CD8-positive, alpha-beta memory T cell (primary cell): ENCODE measurements at regions of chr6 and their contacts with region 1.

Region 1: DNA sequence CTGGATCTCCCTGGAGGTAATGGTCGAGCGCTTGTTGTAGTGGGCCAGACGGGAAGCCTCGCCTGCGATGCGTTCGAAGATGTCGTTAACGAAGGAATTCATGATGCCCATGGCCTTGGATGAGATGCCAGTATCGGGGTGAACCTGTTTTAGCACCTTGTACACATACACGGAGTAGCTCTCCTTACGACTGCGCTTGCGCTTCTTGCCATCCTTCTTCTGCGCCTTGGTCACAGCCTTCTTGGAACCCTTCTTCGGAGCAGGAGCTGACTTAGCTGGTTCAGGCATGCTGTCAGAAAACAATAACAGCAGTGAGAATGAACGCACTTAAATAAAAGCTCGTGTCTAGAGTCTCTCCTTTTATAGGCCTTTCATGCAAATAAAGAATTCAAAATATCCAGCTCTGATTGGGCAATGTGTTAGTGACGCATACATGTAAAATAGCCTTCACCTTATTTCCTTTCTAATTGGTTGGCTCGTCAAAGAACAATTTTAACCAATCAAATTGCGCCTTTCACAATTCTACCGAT is 129.2 kb downstream of the HFE start:
- DNase-seq: peak; percentile 43 to 93 (median 91)
- H3K4me3 ChIP-seq: peak overlapping the region; percentile 91
- H3K4me3 Mint-ChIP-seq: no peak overlapping the region
- H3K27ac ChIP-seq: peak overlapping the region; percentile 94
- H3K27ac Mint-ChIP-seq: no peak overlapping the region
- H3K4me1 ChIP-seq: peaks cover 23% of the 10 kb centered on the region
- H3K4me1 Mint-ChIP-seq: peaks cover 2 to 8% (median 5%) of the 10 kb centered on the region in 3 donors
- H3K27me3 ChIP-seq: no peaks in the 10 kb centered on the region
- H3K27me3 Mint-ChIP-seq: no peaks in the 10 kb centered on the region

Region 2: DNA sequence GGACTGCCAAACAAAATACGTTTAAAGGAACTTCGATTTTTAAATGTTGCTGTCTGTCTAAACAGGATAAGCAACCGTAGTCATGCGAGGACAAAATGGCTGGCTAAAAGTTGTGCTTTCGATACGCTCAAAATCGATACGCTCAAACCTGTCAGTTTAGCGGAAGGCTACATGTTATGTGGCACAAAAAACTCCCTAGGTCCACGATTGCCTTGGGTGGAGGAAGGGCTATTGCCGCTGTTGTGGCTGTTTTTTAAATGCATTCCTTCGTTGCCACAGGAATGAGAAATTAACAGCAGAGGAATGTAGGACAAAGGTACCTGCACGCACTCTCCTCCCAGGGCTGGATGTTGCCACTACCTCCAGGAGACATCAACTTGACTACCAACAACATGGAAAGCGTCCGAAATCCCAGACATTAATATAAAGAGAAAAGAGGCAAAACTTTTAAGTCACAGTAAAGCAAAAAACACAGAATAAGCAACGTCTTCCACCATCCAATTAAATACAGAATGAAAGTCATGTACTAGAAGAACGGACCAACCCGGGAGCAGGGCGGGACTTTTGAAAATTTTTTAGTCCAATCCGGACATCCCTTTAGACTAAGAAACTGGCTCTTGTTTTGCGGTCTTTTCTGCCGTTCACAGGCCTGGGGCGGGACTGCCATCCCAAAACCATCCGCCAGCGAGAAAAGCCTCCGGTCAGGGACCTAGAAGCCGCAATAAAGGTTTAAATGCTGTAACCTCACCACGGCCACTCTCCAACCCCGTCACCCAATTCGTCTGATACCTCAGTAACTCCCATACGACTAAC is 161.4 kb before region 1 on chr6:
- CTCF ChIA-PET with region 1: interaction called, 3 read pairs
- POLR2A ChIA-PET with region 1: interaction called, 10 read pairs
- DNase-seq: peak; percentile 74 to 89 (median 86)
- H3K4me3 ChIP-seq: peak overlapping the region; percentile 92
- H3K4me3 Mint-ChIP-seq: peak overlapping the region; percentile 90 to 97 (median 94)
- H3K27ac ChIP-seq: peak overlapping the region; percentile 96
- H3K27ac Mint-ChIP-seq: peak overlapping the region; percentile 90 to 99 (median 97)
- H3K4me1 ChIP-seq: peaks cover 9% of the 10 kb centered on the region
- H3K4me1 Mint-ChIP-seq: peaks cover 17 to 30% (median 26%) of the 10 kb centered on the region in 3 donors
- H3K27me3 ChIP-seq: no peaks in the 10 kb centered on the region
- H3K27me3 Mint-ChIP-seq: peaks cover 0 to 4% of the 10 kb centered on the region in 2 donors

Region 3: DNA sequence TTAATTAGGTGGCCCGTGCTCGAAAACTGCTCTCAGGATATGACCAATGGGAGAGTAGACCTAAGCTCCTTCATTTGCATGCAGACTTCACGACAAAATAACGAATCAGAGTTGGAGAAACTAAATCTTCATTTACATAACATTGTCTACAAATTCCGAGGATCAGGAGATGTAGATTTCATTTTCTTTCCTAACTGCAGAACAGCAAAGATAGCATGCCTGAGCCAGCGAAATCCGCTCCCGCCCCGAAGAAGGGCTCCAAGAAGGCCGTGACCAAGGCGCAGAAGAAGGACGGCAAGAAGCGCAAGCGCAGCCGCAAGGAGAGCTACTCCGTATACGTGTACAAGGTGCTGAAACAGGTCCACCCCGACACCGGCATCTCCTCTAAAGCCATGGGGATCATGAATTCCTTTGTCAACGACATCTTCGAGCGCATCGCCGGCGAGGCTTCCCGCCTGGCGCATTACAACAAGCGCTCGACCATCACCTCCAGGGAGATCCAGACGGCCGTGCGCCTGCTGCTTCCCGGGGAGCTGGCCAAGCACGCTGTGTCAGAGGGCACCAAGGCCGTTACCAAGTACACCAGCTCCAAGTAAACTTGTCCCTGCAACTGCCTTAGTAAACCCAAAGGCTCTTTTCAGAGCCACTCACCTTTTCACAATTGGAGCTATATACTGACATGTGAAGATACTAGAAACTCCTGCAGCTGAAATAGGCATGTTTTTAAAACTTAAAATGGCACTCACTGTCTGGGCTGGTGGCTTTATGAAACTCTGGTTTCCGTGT is 32.6 kb before region 1 on chr6:
- CTCF ChIA-PET with region 1: interaction called, 28 read pairs
- POLR2A ChIA-PET with region 1: interaction called, 85 read pairs
- DNase-seq: peak; percentile 31 to 78 (median 72)
- H3K4me3 ChIP-seq: peak overlapping the region; percentile 81
- H3K4me3 Mint-ChIP-seq: peak overlapping the region; percentile 86 to 99 (median 97)
- H3K27ac ChIP-seq: peak overlapping the region; percentile 71
- H3K27ac Mint-ChIP-seq: peak overlapping the region; percentile 71 to 99 (median 96)
- H3K4me1 ChIP-seq: peaks cover 33% of the 10 kb centered on the region
- H3K4me1 Mint-ChIP-seq: peaks cover 41 to 53% (median 44%) of the 10 kb centered on the region in 3 donors
- H3K27me3 ChIP-seq: no peaks in the 10 kb centered on the region
- H3K27me3 Mint-ChIP-seq: no peaks in the 10 kb centered on the region

Region 4: DNA sequence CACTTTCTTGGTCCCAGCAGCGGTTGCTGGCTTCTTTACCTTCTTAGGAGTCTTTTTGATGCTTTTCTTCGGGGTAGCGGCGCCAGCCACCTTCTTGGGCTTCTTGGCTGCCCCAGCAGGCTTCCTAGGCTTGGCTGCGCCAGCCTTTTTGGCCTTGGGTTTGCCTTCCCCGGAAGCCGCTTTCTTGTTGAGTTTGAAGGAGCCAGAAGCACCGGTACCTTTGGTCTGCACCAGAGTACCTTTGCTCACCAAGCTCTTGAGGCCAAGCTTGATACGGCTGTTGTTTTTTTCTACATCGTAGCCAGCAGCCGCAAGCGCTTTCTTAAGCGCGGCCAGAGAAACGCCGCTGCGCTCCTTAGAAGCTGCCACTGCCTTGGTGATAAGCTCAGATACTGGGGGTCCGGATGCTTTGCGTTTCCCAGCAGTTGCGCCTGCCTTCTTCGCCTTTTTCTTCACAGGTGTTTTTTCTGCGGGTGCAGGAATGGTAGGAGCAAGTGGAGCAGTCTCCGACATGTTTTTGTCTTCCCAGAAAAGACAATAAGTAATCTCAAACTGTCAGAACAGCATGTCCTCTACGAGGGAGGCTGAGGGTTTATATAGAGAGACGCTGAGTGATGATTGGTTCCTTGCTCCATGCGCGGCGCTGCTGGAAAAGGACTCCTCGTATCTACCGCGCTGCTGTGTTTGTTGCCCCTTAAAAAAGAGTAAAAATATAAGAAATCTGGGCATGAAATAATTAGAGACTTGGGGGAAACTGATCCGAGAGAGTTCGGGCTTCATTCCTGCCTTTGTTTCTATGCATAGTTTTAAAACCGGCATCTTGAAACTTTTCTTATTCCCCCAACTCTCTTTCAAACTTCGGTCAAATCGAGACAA is 18.2 kb after region 1 on chr6:
- CTCF ChIA-PET with region 1: interaction called, 40 read pairs
- POLR2A ChIA-PET with region 1: interaction called, 234 read pairs
- DNase-seq: peak; percentile 38 to 84 (median 76)
- H3K4me3 ChIP-seq: peak overlapping the region; percentile 94
- H3K4me3 Mint-ChIP-seq: peak overlapping the region; percentile 87 to 95 (median 91)
- H3K27ac ChIP-seq: peak overlapping the region; percentile 88
- H3K27ac Mint-ChIP-seq: peak overlapping the region; percentile 87 to 98 (median 96)
- H3K4me1 ChIP-seq: peaks cover 19% of the 10 kb centered on the region
- H3K4me1 Mint-ChIP-seq: peaks cover 28 to 35% (median 35%) of the 10 kb centered on the region in 3 donors
- H3K27me3 ChIP-seq: no peaks in the 10 kb centered on the region
- H3K27me3 Mint-ChIP-seq: peaks cover 0 to 5% of the 10 kb centered on the region in 2 donors

Region 5: GRCh38 chr6:26249957-26250697 is 33.7 kb after region 1 on chr6:
- CTCF ChIA-PET with region 1: interaction called, 59 read pairs
- POLR2A ChIA-PET with region 1: interaction called, 8 read pairs
- DNase-seq: peak; percentile 58 to 89 (median 77)
- H3K4me3 ChIP-seq: peak overlapping the region; percentile 94
- H3K4me3 Mint-ChIP-seq: peak overlapping the region; percentile 95 to 99 (median 97)
- H3K27ac ChIP-seq: peak overlapping the region; percentile 74
- H3K27ac Mint-ChIP-seq: peak overlapping the region; percentile 56 to 96 (median 93)
- H3K4me1 ChIP-seq: peaks cover 10% of the 10 kb centered on the region
- H3K4me1 Mint-ChIP-seq: peaks cover 36 to 58% (median 48%) of the 10 kb centered on the region in 3 donors
- H3K27me3 ChIP-seq: no peaks in the 10 kb centered on the region
- H3K27me3 Mint-ChIP-seq: no peaks in the 10 kb centered on the region